Lower lobe of right lung (tissue), 2 donors: ENCODE measurements at regions of chr6 and their contacts with region 1.

Region 1: DNA sequence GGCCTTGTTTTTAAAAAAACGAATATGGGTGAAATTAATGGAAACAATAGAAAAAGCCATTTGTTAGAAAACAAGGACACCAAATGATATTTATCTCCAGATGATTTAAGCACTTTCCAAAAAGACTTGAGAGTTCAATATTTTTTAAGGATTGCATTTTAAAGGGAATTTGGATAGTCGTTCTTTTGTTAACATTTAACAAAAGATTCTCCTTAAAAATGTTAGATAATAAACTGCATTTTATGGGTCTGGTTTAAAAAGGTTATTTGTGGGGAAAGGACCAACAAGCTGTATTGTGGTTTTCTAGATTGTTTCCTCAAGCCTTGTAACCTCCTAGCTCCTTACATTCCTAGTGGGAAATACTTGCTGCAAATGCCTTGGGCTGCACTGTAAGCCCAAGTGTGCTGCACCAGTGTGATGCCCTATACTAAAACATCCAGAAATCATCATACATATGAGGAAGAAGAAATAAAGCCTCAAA is 1.5 kb upstream of the PHIP start:
- DNase-seq: no peak
- ATAC-seq: no peak
- H3K4me3 ChIP-seq: peak overlapping the region; percentile 78
- H3K27ac ChIP-seq: peak overlapping the region; percentile 96
- H3K4me1 ChIP-seq: peaks cover 32% of the 10 kb centered on the region
- H3K27me3 ChIP-seq: no peaks in the 10 kb centered on the region
- CTCF ChIP-seq: no peak

Region 2: DNA sequence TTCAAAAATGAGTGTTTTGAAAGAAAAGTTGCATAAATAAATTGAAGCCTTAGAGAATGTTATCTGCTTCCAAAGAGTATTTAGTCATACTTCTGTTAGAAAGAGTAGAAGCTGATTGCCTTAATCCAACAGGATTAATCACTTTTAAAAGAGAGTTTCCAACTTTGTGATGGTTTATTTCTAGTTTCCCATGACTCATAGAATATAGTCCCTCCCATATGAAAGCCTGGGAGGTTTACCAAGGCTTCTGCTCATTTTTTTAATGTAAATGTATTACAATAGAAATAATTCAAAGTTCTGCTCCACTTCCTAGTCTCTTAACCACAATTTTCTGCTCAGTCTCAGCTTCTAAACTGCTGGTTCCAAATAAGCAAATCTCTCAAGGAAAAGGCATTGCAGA is 330.3 kb before region 1 on chr6:
- intact Hi-C with region 1: no loop called
- DNase-seq: no peak
- ATAC-seq: no peak
- H3K4me3 ChIP-seq: no peak overlapping the region
- H3K27ac ChIP-seq: no peak overlapping the region
- H3K4me1 ChIP-seq: no peaks in the 10 kb centered on the region
- H3K27me3 ChIP-seq: no peaks in the 10 kb centered on the region
- CTCF ChIP-seq: no peak

Region 3: DNA sequence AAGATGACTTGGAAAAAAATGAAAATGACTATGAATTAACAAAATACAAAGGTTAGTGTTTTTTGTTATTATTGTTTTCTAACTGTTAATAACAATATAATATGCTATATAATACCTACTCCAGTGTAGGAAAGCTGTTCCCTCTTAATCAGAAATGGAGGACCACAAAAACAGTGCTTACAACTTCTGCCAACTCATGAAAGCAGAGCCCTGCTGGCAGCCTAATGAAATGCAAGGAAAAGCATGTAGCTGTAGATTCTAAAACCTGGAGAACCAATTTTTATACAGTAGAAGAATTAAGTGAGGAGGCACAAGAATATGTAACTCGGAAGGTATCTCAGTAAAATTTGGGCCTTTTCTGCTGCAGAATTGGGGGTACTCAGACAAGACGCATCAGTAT is 31.0 kb before region 1 on chr6:
- intact Hi-C with region 1: no loop called
- DNase-seq: no peak
- ATAC-seq: no peak
- H3K4me3 ChIP-seq: no peak overlapping the region
- H3K27ac ChIP-seq: no peak overlapping the region
- H3K4me1 ChIP-seq: no peaks in the 10 kb centered on the region
- H3K27me3 ChIP-seq: no peaks in the 10 kb centered on the region
- CTCF ChIP-seq: no peak

Region 4: GRCh38 chr6:79233611-79234149 is 154.1 kb after region 1 on chr6:
- intact Hi-C with region 1: loop called (anchors 10 kb)
- DNase-seq: peak; percentile 94
- ATAC-seq: peak; percentile 96 to 97
- H3K4me3 ChIP-seq: peak overlapping the region; percentile 79
- H3K27ac ChIP-seq: peak overlapping the region; percentile 87
- H3K4me1 ChIP-seq: peaks cover 29% of the 10 kb centered on the region
- H3K27me3 ChIP-seq: no peaks in the 10 kb centered on the region
- CTCF ChIP-seq: peak; percentile 30

Region 5: GRCh38 chr6:79431537-79431933 is 351.9 kb after region 1 on chr6:
- intact Hi-C with region 1: no loop called
- DNase-seq: no peak
- ATAC-seq: no peak
- H3K4me3 ChIP-seq: no peak overlapping the region
- H3K27ac ChIP-seq: no peak overlapping the region
- H3K4me1 ChIP-seq: no peaks in the 10 kb centered on the region
- H3K27me3 ChIP-seq: no peaks in the 10 kb centered on the region
- CTCF ChIP-seq: no peak